Calu3 (cell line): ENCODE measurements at regions of chr1 and their contacts with region 1.

Region 1: GRCh38 chr1:54479841-54480524 is 68.0 kb upstream of the ACOT11 start:
- DNase-seq: no peak
- H3K4me3 Mint-ChIP-seq: no peak overlapping the region
- H3K27ac Mint-ChIP-seq: no peak overlapping the region
- H3K4me1 Mint-ChIP-seq: no peaks in the 10 kb centered on the region
- H3K27me3 Mint-ChIP-seq: peaks cover 71% of the 10 kb centered on the region
- CTCF ChIP-seq: no peak

Region 2: DNA sequence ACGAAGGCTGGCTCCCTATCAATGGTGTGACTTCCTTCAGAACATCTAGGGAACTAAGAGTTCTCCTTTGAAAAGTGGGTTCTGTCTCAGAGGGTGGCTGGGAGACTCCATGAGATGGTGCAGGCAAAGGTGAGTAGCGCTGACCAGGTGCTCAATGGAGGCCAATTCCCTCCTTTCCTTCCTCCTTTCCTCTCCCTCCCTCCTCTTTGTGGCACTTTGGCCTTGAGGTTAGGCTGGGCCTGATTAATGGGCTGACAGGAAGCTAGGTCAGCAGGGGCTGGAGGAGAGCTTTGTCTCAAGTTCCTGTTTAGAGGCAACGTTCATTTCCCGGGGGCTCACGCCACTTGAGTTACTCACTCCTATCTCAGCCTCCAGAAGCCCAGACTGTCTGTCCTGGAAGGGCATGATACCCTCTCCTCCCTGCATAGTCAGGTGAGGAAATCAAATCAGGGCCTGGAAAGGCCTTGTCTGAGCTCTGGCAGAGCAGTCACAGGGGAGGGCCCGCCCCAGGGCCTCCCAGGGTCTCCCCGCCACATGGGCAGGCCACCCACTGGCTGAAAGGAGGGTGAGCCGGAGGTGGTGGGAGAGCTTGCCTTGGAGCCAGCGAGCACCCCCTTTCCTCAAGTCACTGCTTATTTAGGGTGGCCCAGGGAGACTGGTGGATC is 15.4 kb before region 1 on chr1:
- CTCF ChIA-PET with region 1: interaction called, 10 read pairs
- intact Hi-C with region 1: no loop called
- DNase-seq: no peak
- H3K4me3 Mint-ChIP-seq: no peak overlapping the region
- H3K27ac Mint-ChIP-seq: no peak overlapping the region
- H3K4me1 Mint-ChIP-seq: peaks cover 11% of the 10 kb centered on the region
- H3K27me3 Mint-ChIP-seq: peaks cover 14% of the 10 kb centered on the region
- CTCF ChIP-seq: no peak